ENCODE measurements at regions of chr22 and their contacts with region 1.

Region 1: GRCh38 chr22:50185384-50186087 is at the start of gene TRABD:
- DNase-seq: peak; percentile 87
- ATAC-seq: peak; percentile 59
- H3K4me3 Mint-ChIP-seq: peak within 1 kb of the TSS; percentile 93
- H3K27ac Mint-ChIP-seq: peak within 1 kb of the TSS; percentile 84
- H3K4me1 Mint-ChIP-seq: peaks cover 42% of the 10 kb centered on the region
- H3K27me3 Mint-ChIP-seq: peaks cover 2% of the 10 kb centered on the region
- CTCF ChIP-seq: no peak
- total RNA-seq, gene TRABD: 80.6 and 86.4 TPM in 2 replicates

Region 2: DNA sequence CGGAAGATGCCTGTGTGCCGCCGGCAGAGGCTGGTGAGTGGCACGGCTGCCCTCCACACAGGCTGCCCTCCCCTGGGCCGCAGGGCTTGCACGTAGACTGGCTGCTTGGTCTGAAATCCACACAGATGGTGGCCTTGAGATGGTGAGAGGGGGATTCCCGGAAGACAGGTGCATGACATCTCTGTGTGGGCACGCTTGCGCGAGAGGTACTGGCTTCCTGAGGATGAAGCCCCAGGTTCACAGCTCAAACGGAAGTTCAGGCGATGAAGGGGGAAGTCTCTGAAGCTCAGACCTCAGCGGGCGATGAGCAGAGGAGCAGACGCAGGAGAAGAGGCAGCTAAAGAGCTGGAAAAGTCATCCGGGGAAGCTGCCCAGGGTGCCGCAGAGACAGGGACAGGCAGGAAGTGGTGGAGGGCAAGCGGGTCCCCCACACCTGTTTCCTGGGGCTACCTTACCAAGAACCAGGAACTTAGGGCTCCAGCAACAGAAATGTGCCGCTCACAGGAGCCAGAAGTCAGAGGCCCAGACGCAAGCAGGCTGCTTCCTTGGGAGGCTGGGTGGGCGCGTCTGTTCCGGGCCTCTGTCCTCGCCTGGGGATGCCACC is 259.9 kb before region 1 on chr22:
- CTCF ChIA-PET with region 1: no interaction called
- POLR2A ChIA-PET with region 1: interaction called, 36 read pairs
- intact Hi-C with region 1: no loop called
- DNase-seq: peak; percentile 75
- ATAC-seq: peak; percentile 76
- H3K4me3 Mint-ChIP-seq: peak overlapping the region; percentile 81
- H3K27ac Mint-ChIP-seq: peak overlapping the region; percentile 98
- H3K4me1 Mint-ChIP-seq: peaks cover 58% of the 10 kb centered on the region
- H3K27me3 Mint-ChIP-seq: no peaks in the 10 kb centered on the region
- CTCF ChIP-seq: no peak

Region 3: DNA sequence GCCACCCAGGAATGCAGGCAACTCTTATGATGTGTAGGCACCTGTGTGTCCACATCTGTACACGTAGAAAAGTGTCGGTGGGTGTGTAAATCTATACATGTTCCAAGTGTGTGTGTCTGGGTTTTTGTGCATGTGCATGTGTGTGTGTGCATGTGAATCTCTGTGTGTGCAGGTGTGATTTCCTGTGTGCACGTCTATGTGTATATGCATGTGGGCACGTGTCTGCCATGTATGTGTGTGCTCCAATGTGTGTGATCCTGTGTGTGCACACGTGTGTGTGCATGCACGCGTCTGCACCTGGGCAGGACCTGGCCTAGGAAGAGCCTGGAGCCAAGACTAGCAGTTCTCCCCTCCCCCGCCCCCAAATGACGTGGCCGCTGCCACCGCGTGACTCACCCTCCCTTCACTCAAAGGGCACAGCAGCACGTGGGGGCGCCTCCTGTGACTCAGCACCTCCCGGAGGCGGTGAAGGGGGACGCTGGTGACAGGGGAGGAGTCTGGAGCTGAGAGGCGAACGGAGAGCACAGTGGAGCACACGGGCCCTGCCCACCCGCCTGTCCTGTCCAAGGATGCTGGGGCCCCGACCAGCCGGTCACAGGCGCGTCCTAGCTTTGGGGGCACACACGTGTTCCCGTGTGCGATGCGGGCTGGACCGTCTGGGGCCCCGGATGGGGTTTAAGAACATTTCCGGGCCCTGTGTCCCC is 214.9 kb before region 1 on chr22:
- CTCF ChIA-PET with region 1: no interaction called
- POLR2A ChIA-PET with region 1: interaction called, 8 read pairs
- intact Hi-C with region 1: loop called (anchors 2 kb)
- DNase-seq: peak; percentile 81
- ATAC-seq: peak; percentile 89
- H3K4me3 Mint-ChIP-seq: peak overlapping the region; percentile 80
- H3K27ac Mint-ChIP-seq: peak overlapping the region; percentile 85
- H3K4me1 Mint-ChIP-seq: peaks cover 38% of the 10 kb centered on the region
- H3K27me3 Mint-ChIP-seq: no peaks in the 10 kb centered on the region
- CTCF ChIP-seq: no peak

Region 4: DNA sequence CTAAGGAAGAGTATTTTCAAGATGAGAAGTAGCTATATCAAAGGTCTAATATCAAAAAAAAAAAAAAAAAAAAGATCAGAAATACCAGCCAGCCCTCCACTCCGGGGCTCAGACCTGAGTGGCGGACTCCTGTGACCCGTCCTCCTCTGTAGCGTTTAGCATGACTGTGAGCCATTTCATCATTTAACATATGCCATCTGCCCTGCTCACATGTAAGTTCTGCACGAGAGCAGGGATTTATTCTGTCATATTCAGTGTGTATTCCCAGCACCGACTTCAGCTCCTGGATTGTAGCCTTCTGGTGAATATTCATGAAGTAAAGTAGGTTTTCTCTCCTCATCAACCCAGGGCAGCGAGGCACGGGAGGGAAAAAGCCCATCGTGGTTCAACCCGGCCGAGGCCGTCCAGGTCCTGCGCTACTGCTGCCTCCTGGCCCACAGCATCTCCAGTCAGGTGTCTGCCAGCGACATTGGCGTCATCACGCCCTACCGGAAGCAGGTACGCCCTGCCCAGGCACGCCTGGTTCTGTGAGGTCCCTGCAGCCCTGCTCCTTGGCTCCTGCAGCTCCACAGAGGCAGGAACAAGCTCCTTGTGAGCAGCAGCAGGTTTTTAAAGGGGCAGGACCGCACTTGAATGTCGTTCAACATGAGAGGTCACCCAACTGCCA is 27.7 kb before region 1 on chr22:
- CTCF ChIA-PET with region 1: no interaction called
- POLR2A ChIA-PET with region 1: no interaction called
- intact Hi-C with region 1: no loop called
- DNase-seq: no peak
- ATAC-seq: no peak
- H3K4me3 Mint-ChIP-seq: no peak overlapping the region
- H3K27ac Mint-ChIP-seq: no peak overlapping the region
- H3K4me1 Mint-ChIP-seq: no peaks in the 10 kb centered on the region
- H3K27me3 Mint-ChIP-seq: peaks cover 14% of the 10 kb centered on the region
- CTCF ChIP-seq: no peak

Region 5: DNA sequence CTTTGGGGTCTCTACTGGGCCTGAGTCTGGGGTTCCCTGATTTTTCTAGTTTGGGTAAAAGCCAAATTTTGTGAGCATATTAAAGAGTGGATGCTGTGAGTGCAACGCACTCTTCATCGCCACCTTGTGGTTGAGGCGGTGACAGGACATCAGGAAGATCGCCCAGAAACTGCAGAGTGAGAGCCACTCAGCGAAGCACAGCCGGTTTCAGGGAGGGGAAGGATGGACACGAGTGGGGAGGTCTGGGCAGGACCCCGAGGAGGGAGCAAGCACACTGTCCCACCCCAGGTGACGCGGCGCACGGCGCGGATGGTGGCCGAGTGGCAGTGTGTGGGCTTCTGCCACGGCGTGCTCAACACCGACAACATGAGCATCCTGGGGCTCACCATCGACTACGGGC is 24.4 kb after region 1 on chr22:
- CTCF ChIA-PET with region 1: interaction called, 13 read pairs
- POLR2A ChIA-PET with region 1: interaction called, 55 read pairs
- intact Hi-C with region 1: loop called (anchors 1 kb)
- DNase-seq: peak; percentile 60
- ATAC-seq: peak; percentile 54
- H3K4me3 Mint-ChIP-seq: no peak overlapping the region
- H3K27ac Mint-ChIP-seq: peak overlapping the region; percentile 35
- H3K4me1 Mint-ChIP-seq: peaks cover 27% of the 10 kb centered on the region
- H3K27me3 Mint-ChIP-seq: no peaks in the 10 kb centered on the region
- CTCF ChIP-seq: no peak

Region 6: GRCh38 chr22:50469377-50470305 is 284.1 kb after region 1 on chr22:
- CTCF ChIA-PET with region 1: no interaction called
- POLR2A ChIA-PET with region 1: interaction called, 11 read pairs
- intact Hi-C with region 1: loop called (anchors 2 kb)
- DNase-seq: peak; percentile 84
- ATAC-seq: peak; percentile 81
- H3K4me3 Mint-ChIP-seq: peak overlapping the region; percentile 68
- H3K27ac Mint-ChIP-seq: peak overlapping the region; percentile 88
- H3K4me1 Mint-ChIP-seq: peaks cover 69% of the 10 kb centered on the region
- H3K27me3 Mint-ChIP-seq: no peaks in the 10 kb centered on the region
- CTCF ChIP-seq: no peak

Region 7: DNA sequence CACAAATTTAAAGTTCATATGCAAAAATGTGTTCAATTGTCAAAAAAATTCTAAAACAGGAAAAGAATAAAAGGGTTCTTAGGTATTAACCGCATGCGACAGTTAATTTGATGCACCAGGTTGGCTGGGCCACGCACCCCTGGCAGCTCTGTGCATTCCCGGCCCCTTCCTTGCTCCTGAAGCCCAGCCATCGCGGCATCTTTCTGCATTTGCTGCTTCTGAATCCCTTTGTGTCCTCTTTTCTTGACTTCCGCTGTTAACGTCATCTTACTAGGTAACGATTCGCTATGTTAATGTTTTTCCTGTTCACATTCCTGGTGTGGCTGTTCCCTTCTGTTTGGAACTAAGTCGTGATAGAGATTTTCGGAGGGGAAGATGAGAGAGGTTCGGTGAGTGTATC is 352.2 kb after region 1 on chr22:
- CTCF ChIA-PET with region 1: no interaction called
- POLR2A ChIA-PET with region 1: interaction called, 29 read pairs
- intact Hi-C with region 1: loop called (anchors 2 kb)
- DNase-seq: no peak
- ATAC-seq: no peak
- H3K4me3 Mint-ChIP-seq: peak overlapping the region; percentile 13
- H3K27ac Mint-ChIP-seq: peak overlapping the region; percentile 91
- H3K4me1 Mint-ChIP-seq: peaks cover 82% of the 10 kb centered on the region
- H3K27me3 Mint-ChIP-seq: no peaks in the 10 kb centered on the region
- CTCF ChIP-seq: no peak